Aorta (tissue), 5 donors: ENCODE measurements at regions of chr3 and their contacts with region 1.

Region 1: GRCh38 chr3:117019082-117019713 is 309.6 kb downstream of the TUSC7 start:
- DNase-seq: peak in 1 of 2 donors; percentile 68
- ATAC-seq: peak; percentile 73
- H3K4me3 ChIP-seq: peak overlapping the region in 1 of 2 donors; percentile 34
- H3K27ac ChIP-seq: no peak overlapping the region
- H3K4me1 ChIP-seq: no peaks in the 10 kb centered on the region
- H3K27me3 ChIP-seq: no peaks in the 10 kb centered on the region

Region 2: GRCh38 chr3:116886202-116886893 is 132.8 kb before region 1 on chr3:
- intact Hi-C with region 1: no loop called
- DNase-seq: no peak
- ATAC-seq: no peak
- H3K4me3 ChIP-seq: no peak overlapping the region
- H3K27ac ChIP-seq: no peak overlapping the region
- H3K4me1 ChIP-seq: no peaks in the 10 kb centered on the region
- H3K27me3 ChIP-seq: no peaks in the 10 kb centered on the region

Region 3: DNA sequence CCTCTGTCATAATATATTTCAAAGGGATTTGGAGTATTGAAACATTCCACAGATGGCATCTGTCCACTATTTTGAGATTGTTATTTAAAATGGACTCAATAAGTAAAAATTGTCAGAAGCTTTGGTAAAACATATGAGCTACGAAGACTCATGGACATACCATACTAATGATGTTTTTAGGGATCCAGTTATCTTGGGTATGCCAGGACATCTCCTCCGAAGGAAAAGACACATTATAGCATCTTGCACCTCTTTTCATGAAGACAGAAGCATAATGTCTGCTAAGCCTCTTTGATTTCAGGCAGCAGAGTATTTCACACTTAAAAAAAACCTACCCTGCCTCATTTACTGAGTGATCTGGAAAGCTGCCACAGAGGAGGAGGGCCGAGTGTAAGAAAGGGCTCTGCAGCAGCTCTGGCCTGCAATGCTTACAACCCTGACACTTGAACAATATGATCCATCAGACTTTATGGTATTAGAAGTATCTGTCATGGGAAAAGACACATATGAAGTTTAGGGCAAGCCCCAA is 24.8 kb before region 1 on chr3:
- intact Hi-C with region 1: no loop called
- DNase-seq: no peak
- ATAC-seq: no peak
- H3K4me3 ChIP-seq: no peak overlapping the region
- H3K27ac ChIP-seq: peak overlapping the region in 1 of 2 donors; percentile 23
- H3K4me1 ChIP-seq: peaks cover 4 to 11% of the 10 kb centered on the region in 2 donors
- H3K27me3 ChIP-seq: no peaks in the 10 kb centered on the region

Region 4: DNA sequence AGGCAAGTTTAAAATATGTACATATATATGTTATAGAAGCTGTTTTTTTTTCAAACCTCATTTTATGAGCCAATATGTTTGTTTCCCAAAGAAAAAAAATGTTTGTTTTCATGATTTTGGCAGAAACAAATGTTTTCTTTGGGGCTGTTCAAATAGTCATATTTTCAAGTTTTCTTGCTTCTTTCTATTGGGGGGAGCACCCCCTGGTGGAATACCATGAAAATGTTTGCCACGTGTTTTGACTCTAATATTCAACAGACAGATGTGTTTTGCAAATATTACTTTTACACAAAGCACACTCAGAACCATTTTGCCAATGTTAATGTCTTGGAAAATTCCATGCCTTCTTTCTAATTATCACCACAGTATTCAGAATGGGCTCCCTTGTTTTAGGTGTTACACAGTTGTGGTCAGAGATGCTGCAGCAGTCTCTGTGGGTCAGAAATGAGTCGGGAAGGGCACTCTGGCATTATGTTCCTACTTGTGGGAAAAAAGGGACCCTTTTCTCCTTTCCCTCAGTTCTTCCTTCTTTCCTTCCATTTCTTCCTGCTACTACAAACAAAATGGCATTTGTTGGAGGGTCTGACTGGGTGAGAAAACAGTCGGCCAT is 507.4 kb after region 1 on chr3:
- intact Hi-C with region 1: loop called (anchors 5 kb)
- DNase-seq: peak in 1 of 2 donors; percentile 44
- ATAC-seq: no peak
- H3K4me3 ChIP-seq: no peak overlapping the region
- H3K27ac ChIP-seq: no peak overlapping the region
- H3K4me1 ChIP-seq: no peaks in the 10 kb centered on the region
- H3K27me3 ChIP-seq: peaks cover 0 to 1% of the 10 kb centered on the region in 2 donors

Region 5: GRCh38 chr3:117719316-117719926 is 700.2 kb after region 1 on chr3:
- intact Hi-C with region 1: loop called in 1 of 2 experiments (anchors 10 kb)
- DNase-seq: no peak
- ATAC-seq: no peak
- H3K4me3 ChIP-seq: no peak overlapping the region
- H3K27ac ChIP-seq: no peak overlapping the region
- H3K4me1 ChIP-seq: no peaks in the 10 kb centered on the region
- H3K27me3 ChIP-seq: no peaks in the 10 kb centered on the region